Activated CD4-positive, alpha-beta T cell treated with anti-CD3 and anti-CD28 coated beads for 36 hours (primary cell): ENCODE measurements at regions of chr11 and their contacts with region 1.

Region 1: GRCh38 chr11:46616998-46617675 is at the starts of genes ATG13 and HARBI1:
- DNase-seq: peak; percentile 95
- ATAC-seq: peak; percentile 96
- H3K4me3 Mint-ChIP-seq: peak within 1 kb of the TSS; percentile 89
- H3K27ac Mint-ChIP-seq: peak within 1 kb of the TSS; percentile 100
- H3K4me1 Mint-ChIP-seq: peaks cover 31% of the 10 kb centered on the region
- H3K27me3 Mint-ChIP-seq: no peaks in the 10 kb centered on the region
- total RNA-seq, gene ATG13: 39.4 to 56.4 TPM
- total RNA-seq, gene HARBI1: 2.3 to 2.7 TPM

Region 2: GRCh38 chr11:45917623-45918330 is 699.4 kb before region 1 on chr11 and contains the start of gene PEX16:
- CTCF ChIA-PET with region 1: no interaction called
- POLR2A ChIA-PET with region 1: no interaction called
- intact Hi-C with region 1: loop called in 1 of 2 experiments (anchors 1 kb)
- DNase-seq: peak; percentile 97
- ATAC-seq: peak; percentile 94
- H3K4me3 Mint-ChIP-seq: peak within 1 kb of the TSS; percentile 96
- H3K27ac Mint-ChIP-seq: peak within 1 kb of the TSS; percentile 95
- H3K4me1 Mint-ChIP-seq: peaks cover 31% of the 10 kb centered on the region
- H3K27me3 Mint-ChIP-seq: peaks cover 3% of the 10 kb centered on the region
- total RNA-seq, gene PEX16: 28.1 to 33.4 TPM

Region 3: GRCh38 chr11:45929486-45930030 is 687.6 kb before region 1 on chr11:
- CTCF ChIA-PET with region 1: no interaction called
- POLR2A ChIA-PET with region 1: no interaction called
- intact Hi-C with region 1: no loop called
- DNase-seq: no peak
- ATAC-seq: peak; percentile 37
- H3K4me3 Mint-ChIP-seq: no peak overlapping the region
- H3K27ac Mint-ChIP-seq: peak overlapping the region; percentile 59
- H3K4me1 Mint-ChIP-seq: peaks cover 18% of the 10 kb centered on the region
- H3K27me3 Mint-ChIP-seq: no peaks in the 10 kb centered on the region

Region 4: GRCh38 chr11:46392421-46393230 is 224.5 kb before region 1 on chr11:
- CTCF ChIA-PET with region 1: interaction called, 7 read pairs
- POLR2A ChIA-PET with region 1: interaction called, 3 read pairs
- intact Hi-C with region 1: loop called (anchors 1 kb)
- DNase-seq: peak; percentile 89
- ATAC-seq: peak; percentile 76
- H3K4me3 Mint-ChIP-seq: peak overlapping the region; percentile 61
- H3K27ac Mint-ChIP-seq: no peak overlapping the region
- H3K4me1 Mint-ChIP-seq: peaks cover 22% of the 10 kb centered on the region
- H3K27me3 Mint-ChIP-seq: peaks cover 37% of the 10 kb centered on the region

Region 5: GRCh38 chr11:46513934-46514342 is 103.2 kb before region 1 on chr11:
- CTCF ChIA-PET with region 1: no interaction called
- POLR2A ChIA-PET with region 1: no interaction called
- intact Hi-C with region 1: no loop called
- DNase-seq: no peak
- ATAC-seq: no peak
- H3K4me3 Mint-ChIP-seq: no peak overlapping the region
- H3K27ac Mint-ChIP-seq: peak overlapping the region; percentile 64
- H3K4me1 Mint-ChIP-seq: peaks cover 2% of the 10 kb centered on the region
- H3K27me3 Mint-ChIP-seq: no peaks in the 10 kb centered on the region

Region 6: GRCh38 chr11:46593550-46594373 is 23.4 kb before region 1 on chr11 and contains the start of gene AMBRA1:
- CTCF ChIA-PET with region 1: interaction called, 7 read pairs
- POLR2A ChIA-PET with region 1: interaction called, 6 read pairs
- intact Hi-C with region 1: loop called (anchors 1 kb)
- DNase-seq: peak; percentile 91
- ATAC-seq: peak; percentile 87
- H3K4me3 Mint-ChIP-seq: peak within 1 kb of the TSS; percentile 93
- H3K27ac Mint-ChIP-seq: peak within 1 kb of the TSS; percentile 91
- H3K4me1 Mint-ChIP-seq: peaks cover 40% of the 10 kb centered on the region
- H3K27me3 Mint-ChIP-seq: no peaks in the 10 kb centered on the region
- total RNA-seq, gene AMBRA1: 24.8 to 26.4 TPM

Region 7: DNA sequence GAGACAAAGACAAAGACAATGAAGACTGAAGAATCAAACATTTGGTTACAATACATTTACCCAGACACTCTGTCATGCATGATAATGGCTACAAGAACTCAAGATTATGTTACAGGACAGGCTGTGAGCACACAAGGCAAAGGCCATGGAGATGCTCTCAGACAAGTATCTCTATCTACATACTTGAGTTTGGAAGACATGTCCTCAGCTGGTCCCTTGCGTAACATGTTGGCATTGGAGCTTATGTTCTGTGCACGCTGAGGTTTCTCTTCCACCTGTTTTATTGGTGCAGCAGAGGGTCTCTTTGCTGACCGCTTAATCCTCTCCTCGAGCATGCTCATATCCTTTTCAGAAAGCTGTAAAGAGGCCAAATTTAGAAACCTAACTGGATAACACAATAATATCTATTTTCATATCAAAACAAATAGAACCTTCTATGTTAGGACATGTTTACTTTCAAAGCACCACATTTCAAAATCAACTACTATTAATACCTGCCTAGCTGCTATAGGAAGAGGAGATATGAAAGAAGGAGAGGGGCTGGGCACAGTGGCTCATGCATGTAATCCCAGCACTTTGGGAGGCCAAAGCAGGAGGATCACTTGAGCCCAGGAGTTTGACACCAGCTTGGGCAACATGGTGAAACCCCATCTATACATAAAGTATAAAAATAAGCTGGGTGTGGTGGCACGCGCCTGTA is 143.4 kb after region 1 on chr11:
- CTCF ChIA-PET with region 1: no interaction called
- POLR2A ChIA-PET with region 1: no interaction called
- intact Hi-C with region 1: no loop called
- DNase-seq: no peak
- ATAC-seq: no peak
- H3K4me3 Mint-ChIP-seq: no peak overlapping the region
- H3K27ac Mint-ChIP-seq: no peak overlapping the region
- H3K4me1 Mint-ChIP-seq: no peaks in the 10 kb centered on the region
- H3K27me3 Mint-ChIP-seq: no peaks in the 10 kb centered on the region

Region 8: GRCh38 chr11:47213985-47214564 is 596.9 kb after region 1 on chr11:
- CTCF ChIA-PET with region 1: no interaction called
- POLR2A ChIA-PET with region 1: no interaction called
- intact Hi-C with region 1: loop called in 1 of 2 experiments (anchors 1 kb)
- DNase-seq: peak; percentile 94
- ATAC-seq: peak; percentile 80
- H3K4me3 Mint-ChIP-seq: peak overlapping the region; percentile 99
- H3K27ac Mint-ChIP-seq: peak overlapping the region; percentile 100
- H3K4me1 Mint-ChIP-seq: peaks cover 31% of the 10 kb centered on the region
- H3K27me3 Mint-ChIP-seq: no peaks in the 10 kb centered on the region

Region 9: DNA sequence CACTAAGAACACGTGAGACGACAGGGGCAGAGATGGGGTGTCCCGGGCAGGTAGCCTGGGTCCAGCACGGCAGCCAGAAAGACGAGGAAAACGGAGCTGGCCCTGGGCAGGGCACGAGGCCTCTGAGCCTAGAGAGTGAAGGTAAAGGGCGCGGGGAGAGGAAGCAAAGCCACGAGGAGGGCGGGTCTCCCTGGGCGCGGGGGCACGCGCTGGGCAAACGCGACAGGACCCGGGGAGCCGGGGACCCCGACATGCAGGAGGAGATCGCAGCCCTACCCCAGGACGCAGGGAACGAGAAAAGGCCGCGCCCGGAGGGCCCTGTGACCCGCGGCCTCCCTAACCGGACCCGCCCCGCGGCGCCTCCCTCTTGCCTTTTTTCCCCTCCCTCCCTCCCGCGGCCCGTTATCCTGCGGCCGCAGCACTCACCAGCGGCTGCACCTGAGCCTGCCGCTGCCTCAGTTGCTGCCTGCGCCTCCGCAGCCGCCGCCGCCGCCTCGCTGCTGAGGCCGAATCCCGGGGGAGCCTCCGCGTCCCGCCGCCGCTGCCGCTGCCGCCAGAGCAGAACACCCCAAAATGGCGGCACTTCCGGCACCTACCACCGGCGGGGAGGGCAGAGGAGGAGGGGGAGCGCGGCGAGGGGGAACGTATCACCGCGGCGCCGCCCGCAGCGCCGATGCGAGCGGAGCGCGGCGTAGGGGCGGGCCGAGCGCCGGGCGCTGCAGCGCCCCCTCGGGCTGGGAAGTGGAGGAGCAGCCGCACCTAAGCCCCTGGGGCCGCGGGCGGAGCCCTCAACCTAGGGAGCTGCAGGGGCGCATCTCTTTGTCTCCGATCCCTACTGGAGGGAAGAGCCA is 935.7 kb after region 1 on chr11 and contains the start of gene CELF1:
- CTCF ChIA-PET with region 1: no interaction called
- POLR2A ChIA-PET with region 1: no interaction called
- intact Hi-C with region 1: loop called in 1 of 2 experiments (anchors 5 kb)
- DNase-seq: peak; percentile 97
- ATAC-seq: peak; percentile 94
- H3K4me3 Mint-ChIP-seq: peak within 1 kb of the TSS; percentile 96
- H3K27ac Mint-ChIP-seq: peak within 1 kb of the TSS; percentile 94
- H3K4me1 Mint-ChIP-seq: peaks cover 38% of the 10 kb centered on the region
- H3K27me3 Mint-ChIP-seq: no peaks in the 10 kb centered on the region
- total RNA-seq, gene CELF1: 132 to 143 TPM